ENCODE measurements at regions of chr3 and their contacts with region 1.

Region 1: GRCh38 chr3:112979240-112979832 is 4.4 kb upstream of the CD200R1 start:
- DNase-seq: no peak
- H3K4me3 ChIP-seq: no peak overlapping the region
- H3K27ac ChIP-seq: no peak overlapping the region
- H3K4me1 ChIP-seq: peaks cover 0 to 1% (median 0%) of the 10 kb centered on the region in 4 donors
- H3K27me3 ChIP-seq: no peaks in the 10 kb centered on the region
- CTCF ChIP-seq: peak; percentile 46 to 69 (median 50)
- EP300 ChIP-seq: no peak
- POLR2A ChIP-seq: no peak

Region 2: DNA sequence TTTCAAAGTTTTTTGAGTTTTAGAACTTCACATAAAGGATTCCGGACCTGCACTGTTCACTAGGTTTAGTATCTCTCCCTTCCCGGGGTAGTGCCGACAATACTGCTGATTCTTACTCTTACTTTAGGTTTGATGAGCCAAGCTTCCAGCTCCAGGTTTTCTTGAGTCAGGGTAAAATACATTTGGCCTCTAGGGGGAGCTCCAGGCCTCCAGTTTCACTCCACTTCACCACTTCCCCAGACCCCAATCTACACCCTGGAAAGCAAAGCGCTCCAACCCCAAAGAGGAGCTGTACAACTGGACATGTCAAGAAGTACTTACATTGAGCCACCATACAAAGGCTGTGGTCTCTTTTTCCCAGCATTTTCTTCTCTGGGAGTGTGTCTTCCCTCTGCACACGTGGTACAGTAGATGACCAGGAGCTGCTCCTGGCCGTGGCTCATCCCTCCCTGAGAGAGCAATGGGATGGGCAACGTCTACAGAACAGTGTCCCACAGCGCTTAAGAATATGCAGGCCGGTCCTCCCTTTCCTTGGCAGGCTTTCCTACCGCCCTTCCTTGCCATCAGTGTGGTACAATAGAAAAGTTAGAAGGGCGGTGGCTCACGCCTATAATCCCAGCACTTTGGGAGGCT is 244.5 kb before region 1 on chr3:
- intact Hi-C with region 1: loop called (anchors 5 kb)
- DNase-seq: peak; percentile 71
- H3K4me3 ChIP-seq: no peak overlapping the region
- H3K27ac ChIP-seq: no peak overlapping the region
- H3K4me1 ChIP-seq: no peaks in the 10 kb centered on the region
- H3K27me3 ChIP-seq: no peaks in the 10 kb centered on the region
- CTCF ChIP-seq: peak in 3 of 4 experiments; percentile 36 to 58 (median 50)
- EP300 ChIP-seq: no peak
- POLR2A ChIP-seq: no peak

Region 3: DNA sequence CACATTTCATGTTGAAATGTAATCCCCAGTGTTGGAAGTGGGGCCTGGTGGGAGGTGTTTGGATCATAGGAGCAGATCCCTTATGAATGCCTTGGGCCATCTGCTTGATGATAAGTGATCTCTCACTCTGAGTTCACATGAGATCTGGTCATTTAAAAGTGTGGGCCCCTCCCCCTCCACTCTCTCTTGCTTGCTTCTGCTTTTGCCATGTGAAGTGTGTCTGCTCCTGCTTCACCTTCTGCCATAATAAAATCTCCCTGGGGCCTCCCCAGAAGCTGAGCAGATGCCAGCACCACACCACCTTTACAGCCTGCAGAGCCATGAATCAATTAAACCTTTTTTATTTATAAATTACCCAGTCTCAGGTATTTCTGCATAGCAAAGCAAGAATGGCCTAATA is 118.4 kb before region 1 on chr3:
- intact Hi-C with region 1: no loop called
- DNase-seq: no peak
- H3K4me3 ChIP-seq: no peak overlapping the region
- H3K27ac ChIP-seq: no peak overlapping the region
- H3K4me1 ChIP-seq: no peaks in the 10 kb centered on the region
- H3K27me3 ChIP-seq: no peaks in the 10 kb centered on the region
- CTCF ChIP-seq: no peak
- EP300 ChIP-seq: no peak
- POLR2A ChIP-seq: no peak

Region 4: DNA sequence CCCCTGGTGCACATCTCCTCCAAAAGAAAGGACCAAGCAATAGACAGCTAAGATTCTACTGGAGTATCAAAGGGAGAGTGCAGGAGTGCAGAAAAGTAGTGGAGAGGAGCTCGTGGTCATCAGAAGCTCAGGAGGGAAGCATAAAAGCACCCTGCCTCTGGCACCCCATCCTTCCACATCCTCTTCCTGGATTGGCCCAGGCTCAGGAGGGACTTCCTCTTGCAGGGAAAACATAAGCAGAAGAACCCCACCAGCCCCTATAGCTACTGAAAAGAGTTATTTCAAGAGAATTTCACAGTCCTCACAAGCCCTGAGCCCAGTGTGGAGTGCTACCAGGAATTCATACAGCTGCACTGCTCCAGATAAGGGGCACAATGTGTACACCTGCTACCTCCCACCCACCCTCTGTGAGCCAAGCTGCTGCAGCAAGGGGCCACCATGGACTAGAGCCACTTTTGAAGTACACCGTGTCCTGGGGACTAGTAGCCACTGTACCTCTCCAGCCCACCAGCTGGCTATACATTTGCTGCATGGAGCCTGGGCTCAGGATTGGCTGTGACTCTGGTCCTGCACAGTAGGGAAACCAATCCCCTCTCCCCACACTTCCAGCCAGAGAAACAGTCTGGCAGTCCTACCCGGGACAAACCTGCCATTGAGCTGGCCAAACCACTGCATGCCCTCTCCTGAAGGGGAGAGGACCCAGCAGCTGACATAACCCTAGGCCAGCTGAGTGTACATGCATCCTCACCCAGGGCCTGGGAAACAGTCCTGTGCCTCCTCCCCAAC is 47.4 kb before region 1 on chr3:
- intact Hi-C with region 1: no loop called
- DNase-seq: peak; percentile 59
- H3K4me3 ChIP-seq: no peak overlapping the region
- H3K27ac ChIP-seq: no peak overlapping the region
- H3K4me1 ChIP-seq: no peaks in the 10 kb centered on the region
- H3K27me3 ChIP-seq: no peaks in the 10 kb centered on the region
- CTCF ChIP-seq: no peak
- EP300 ChIP-seq: no peak
- POLR2A ChIP-seq: no peak

Region 5: DNA sequence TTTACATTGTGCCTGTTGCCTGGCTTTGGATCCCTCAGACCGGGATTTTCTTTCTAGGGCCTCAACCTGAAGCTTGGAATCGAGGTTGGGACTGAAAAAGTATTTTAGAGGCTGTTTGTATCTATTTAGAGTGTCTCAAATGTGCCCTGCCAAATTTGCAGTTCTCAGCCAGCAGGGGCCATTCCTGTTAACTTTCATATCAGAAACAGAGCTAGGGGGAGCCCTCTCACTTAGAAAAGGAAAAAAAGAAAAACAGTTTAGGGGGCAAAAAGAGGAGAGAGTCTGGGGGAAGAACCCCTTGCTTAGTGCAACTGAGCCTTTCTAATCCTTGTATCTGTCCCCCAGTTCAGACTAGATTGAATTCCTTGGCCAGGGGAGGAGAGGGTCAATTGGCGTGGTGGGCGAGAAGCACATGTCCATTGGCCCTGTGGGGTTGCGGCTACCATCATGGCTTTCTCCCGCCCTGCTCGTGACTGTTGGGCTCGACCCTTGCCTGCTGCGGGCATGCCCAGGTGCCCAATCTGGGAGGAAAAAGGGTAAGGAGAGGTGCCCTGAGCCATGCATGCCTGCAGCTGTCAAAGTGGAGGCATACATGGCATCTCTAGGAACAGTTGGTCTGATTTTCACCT is 360.4 kb after region 1 on chr3:
- intact Hi-C with region 1: no loop called
- DNase-seq: no peak
- H3K4me3 ChIP-seq: no peak overlapping the region
- H3K27ac ChIP-seq: no peak overlapping the region
- H3K4me1 ChIP-seq: no peaks in the 10 kb centered on the region
- H3K27me3 ChIP-seq: no peaks in the 10 kb centered on the region
- CTCF ChIP-seq: no peak
- EP300 ChIP-seq: no peak
- POLR2A ChIP-seq: no peak

Measured in sigmoid colon (tissue), 7 donors.